CD4-positive, alpha-beta T cell (primary cell): ENCODE measurements at regions of chr1 and their contacts with region 1.

Region 1: DNA sequence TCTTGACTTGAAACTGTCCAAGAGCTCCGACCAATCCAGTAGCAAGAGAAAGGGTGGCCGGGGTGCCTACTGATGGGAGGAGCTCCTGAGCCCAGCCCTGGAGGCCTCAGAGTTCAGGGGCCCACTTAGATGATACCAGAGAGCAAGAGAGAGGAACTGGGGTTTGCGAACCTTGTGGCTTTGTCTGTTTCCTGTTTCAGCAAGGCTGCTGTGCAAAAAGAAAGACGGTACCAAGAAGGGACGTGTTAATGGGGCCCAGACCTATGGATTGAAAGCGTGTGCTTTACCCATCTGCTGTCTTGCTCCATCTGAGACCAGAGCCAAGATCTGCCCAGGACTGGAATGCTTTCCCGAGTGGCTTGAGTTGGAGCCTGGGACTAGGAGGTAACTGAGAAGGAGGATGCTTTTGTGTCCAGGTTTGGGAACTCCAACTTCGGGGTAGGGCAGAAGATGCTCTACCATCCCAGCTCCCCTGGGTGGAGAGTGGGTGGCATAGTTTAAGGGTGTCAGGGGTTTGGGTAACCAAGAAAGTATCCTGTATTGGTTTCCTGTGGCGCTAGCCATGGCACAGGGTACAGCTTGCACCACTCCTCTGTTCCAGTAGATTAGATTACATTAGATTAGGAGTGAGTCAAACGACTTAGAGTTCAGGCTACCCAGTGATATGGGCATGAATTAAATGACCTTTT is at the start of gene TRAF3IP3:
- DNase-seq: peak; percentile 60 to 92 (median 70)
- ATAC-seq: peak; percentile 91
- H3K4me3 ChIP-seq: peak within 1 kb of the TSS; percentile 68
- H3K4me3 Mint-ChIP-seq: peak within 1 kb of the TSS; percentile 88
- H3K27ac ChIP-seq: peak within 1 kb of the TSS; percentile 61 to 79
- H3K27ac Mint-ChIP-seq: peak within 1 kb of the TSS; percentile 89
- H3K4me1 ChIP-seq: peaks cover 77% of the 10 kb centered on the region
- H3K4me1 Mint-ChIP-seq: peaks cover 79% of the 10 kb centered on the region
- H3K27me3 ChIP-seq: no peaks in the 10 kb centered on the region
- H3K27me3 Mint-ChIP-seq: no peaks in the 10 kb centered on the region
- CTCF ChIP-seq: no peak
- total RNA-seq, gene TRAF3IP3: 279 to 290 TPM

Region 2: GRCh38 chr1:209774592-209774991 is 18.5 kb after region 1 on chr1:
- CTCF ChIA-PET with region 1: interaction called, 80 read pairs
- POLR2A ChIA-PET with region 1: interaction called, 478 read pairs
- intact Hi-C with region 1: no loop called
- DNase-seq: no peak
- ATAC-seq: no peak
- H3K4me3 ChIP-seq: no peak overlapping the region
- H3K4me3 Mint-ChIP-seq: peak overlapping the region; percentile 4
- H3K27ac ChIP-seq: peak overlapping the region; percentile 29 to 43
- H3K27ac Mint-ChIP-seq: no peak overlapping the region
- H3K4me1 ChIP-seq: peaks cover 60% of the 10 kb centered on the region
- H3K4me1 Mint-ChIP-seq: peaks cover 32% of the 10 kb centered on the region
- H3K27me3 ChIP-seq: no peaks in the 10 kb centered on the region
- H3K27me3 Mint-ChIP-seq: no peaks in the 10 kb centered on the region
- CTCF ChIP-seq: no peak

Region 3: DNA sequence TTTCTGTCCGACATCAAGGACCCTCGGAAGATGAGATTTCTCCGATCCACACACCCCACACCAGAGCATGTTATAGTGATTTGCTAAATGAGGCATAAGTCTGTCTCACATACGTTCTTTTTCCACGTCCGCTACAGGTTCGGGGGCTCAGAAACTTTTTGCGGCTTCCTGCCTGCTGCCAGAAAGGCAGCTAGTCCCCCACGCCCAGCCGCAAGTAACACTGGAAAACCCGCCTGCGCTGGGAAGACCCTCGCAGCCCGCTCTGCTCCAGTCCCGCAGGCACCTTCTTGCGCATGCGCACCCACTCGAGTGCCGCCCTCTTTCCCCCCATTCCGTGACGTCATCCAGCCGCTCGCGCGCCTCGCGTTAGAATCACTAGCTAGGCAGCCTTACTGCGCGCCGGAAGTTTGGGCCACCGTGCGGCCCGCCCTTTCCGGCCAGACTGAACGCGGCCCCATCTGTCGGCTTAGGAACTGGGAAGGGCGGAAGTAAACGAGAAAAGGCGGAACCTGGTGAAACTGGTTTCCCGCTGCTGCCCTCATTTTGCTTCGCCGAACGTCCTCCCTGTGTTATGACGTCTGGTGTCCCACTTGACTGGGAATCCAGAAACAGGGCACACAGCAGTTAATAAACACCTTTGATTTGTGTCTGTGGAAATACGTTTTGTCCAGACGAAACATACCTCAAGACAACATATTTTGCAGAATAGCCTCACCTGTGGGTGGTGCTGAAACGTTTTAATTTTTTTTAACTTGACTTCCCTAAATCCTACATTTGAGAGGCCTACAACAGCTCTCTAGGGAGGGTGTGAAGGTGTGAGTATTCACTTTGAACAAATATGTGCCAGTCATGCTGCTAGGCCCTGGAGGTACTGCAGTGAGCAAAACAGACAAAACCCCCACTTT is 28.4 kb after region 1 on chr1 and contains the start of gene C1orf74:
- CTCF ChIA-PET with region 1: no interaction called
- POLR2A ChIA-PET with region 1: interaction called, 40 read pairs
- intact Hi-C with region 1: no loop called
- DNase-seq: peak; percentile 98 to 100 (median 99)
- ATAC-seq: peak; percentile 98
- H3K4me3 ChIP-seq: peak within 1 kb of the TSS; percentile 69
- H3K4me3 Mint-ChIP-seq: peak within 1 kb of the TSS; percentile 93
- H3K27ac ChIP-seq: peak within 1 kb of the TSS; percentile 74 to 94
- H3K27ac Mint-ChIP-seq: peak within 1 kb of the TSS; percentile 97
- H3K4me1 ChIP-seq: peaks cover 24% of the 10 kb centered on the region
- H3K4me1 Mint-ChIP-seq: peaks cover 28% of the 10 kb centered on the region
- H3K27me3 ChIP-seq: no peaks in the 10 kb centered on the region
- H3K27me3 Mint-ChIP-seq: peaks cover 17% of the 10 kb centered on the region
- CTCF ChIP-seq: no peak
- total RNA-seq, gene C1orf74: 0.63 to 0.67 TPM